ENCODE measurements at regions of chr11 and their contacts with region 1.

Region 1: GRCh38 chr11:8709002-8709672 is 26.5 kb downstream of the RPL27A start:
- DNase-seq: peak; percentile 97
- H3K4me3 ChIP-seq: peak overlapping the region in 3 of 4 donors; percentile 5 to 35 (median 30)
- H3K27ac ChIP-seq: peak overlapping the region; percentile 90 to 97 (median 93)
- H3K4me1 ChIP-seq: peaks cover 46 to 97% (median 92%) of the 10 kb centered on the region in 4 donors
- H3K27me3 ChIP-seq: no peaks in the 10 kb centered on the region
- CTCF ChIP-seq: no peak
- EP300 ChIP-seq: peak; percentile 76
- POLR2A ChIP-seq: no peak

Region 2: DNA sequence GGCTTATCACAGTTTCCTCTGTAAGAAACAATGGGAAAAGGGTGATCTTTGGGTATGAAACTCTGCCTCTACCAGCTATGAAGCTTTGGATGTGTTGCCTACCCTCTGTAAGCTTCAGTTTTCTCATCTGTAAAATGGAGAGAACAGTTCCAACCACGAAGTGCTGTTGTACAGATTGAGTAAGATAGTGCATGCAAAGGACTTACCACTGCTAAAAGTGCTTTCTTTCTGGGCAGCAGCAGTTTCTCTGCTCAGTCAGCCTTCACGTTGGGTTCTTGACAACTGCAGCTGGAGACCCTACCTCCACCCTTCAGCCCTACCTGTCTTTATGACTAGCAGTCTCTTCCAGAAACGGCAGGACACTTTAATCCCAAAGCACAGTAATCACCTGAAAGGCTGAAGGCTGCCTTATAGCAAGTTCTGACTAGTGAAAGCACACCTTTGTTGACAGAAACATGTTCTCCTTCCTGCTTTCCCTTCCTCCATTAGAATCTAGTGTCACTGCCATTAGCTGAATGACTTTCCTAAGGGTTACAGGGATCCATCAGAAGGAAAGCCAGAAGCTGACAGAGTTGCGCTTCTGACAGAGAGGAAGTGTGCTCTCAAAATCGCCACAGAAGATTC is 64.9 kb after region 1 on chr11:
- intact Hi-C with region 1: loop called (anchors 5 kb)
- DNase-seq: no peak
- H3K4me3 ChIP-seq: no peak overlapping the region
- H3K27ac ChIP-seq: peak overlapping the region; percentile 83 to 89 (median 86)
- H3K4me1 ChIP-seq: peaks cover 77 to 100% (median 100%) of the 10 kb centered on the region in 4 donors
- H3K27me3 ChIP-seq: no peaks in the 10 kb centered on the region
- CTCF ChIP-seq: no peak
- EP300 ChIP-seq: no peak
- POLR2A ChIP-seq: no peak

Region 3: DNA sequence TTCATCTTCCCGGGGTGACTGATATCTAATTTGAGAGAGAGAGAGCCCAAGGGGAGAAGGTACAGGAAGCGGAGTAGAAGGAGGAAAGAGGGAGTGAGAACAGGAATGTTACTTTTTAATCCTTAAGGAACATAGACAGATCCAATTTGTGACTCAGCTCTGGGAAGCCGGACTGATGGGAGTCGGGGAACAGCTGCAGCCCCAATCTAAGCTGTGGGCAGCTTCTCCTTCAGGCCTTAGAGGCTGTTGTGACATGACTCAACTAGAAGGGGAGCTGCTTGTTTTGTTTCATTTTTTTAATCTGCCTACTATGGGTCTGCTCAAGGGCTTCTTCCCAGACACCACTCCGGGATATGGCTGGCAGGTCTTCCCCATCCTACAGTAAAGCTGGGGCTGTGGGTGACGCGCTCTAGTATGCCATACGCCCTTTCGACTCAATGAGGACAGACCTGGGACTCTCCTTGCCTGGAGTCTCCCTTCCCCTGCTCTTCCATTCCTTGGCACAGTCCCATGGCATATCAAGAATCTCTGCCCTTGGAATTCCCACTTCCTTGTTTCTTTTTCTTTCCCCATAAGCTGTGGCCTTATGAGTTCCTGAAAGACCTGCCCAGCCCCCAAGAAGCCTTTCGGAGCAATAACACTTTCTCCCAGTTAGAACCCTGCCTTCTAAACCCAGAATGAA is 98.5 kb after region 1 on chr11:
- intact Hi-C with region 1: loop called (anchors 5 kb)
- DNase-seq: no peak
- H3K4me3 ChIP-seq: peak overlapping the region; percentile 65 to 78 (median 74)
- H3K27ac ChIP-seq: peak overlapping the region; percentile 90 to 95 (median 93)
- H3K4me1 ChIP-seq: peaks cover 76 to 89% (median 82%) of the 10 kb centered on the region in 4 donors
- H3K27me3 ChIP-seq: no peaks in the 10 kb centered on the region
- CTCF ChIP-seq: no peak
- EP300 ChIP-seq: no peak
- POLR2A ChIP-seq: no peak